K562 (cell line): ENCODE measurements at regions of chr6 and their contacts with region 1.

Region 1: GRCh38 chr6:49618257-49618656 is 18.4 kb downstream of the RHAG start:
- DNase-seq: no peak
- ATAC-seq: no peak
- H3K4me3 ChIP-seq: no peak overlapping the region
- H3K27ac ChIP-seq: no peak overlapping the region
- H3K4me1 ChIP-seq: no peaks in the 10 kb centered on the region; a peak in 1 of 5 replicates
- H3K27me3 ChIP-seq: no peaks in the 10 kb centered on the region
- CTCF ChIP-seq: no peak
- EP300 ChIP-seq: no peak
- POLR2A ChIP-seq: 0 out of 2 replicates have a peak, but pooled peaks have one; percentile 36
- RAD21 ChIP-seq: no peak

Region 2: GRCh38 chr6:50021894-50022293 is 403.6 kb after region 1 on chr6 and contains the start of gene DEFB110:
- CTCF ChIA-PET with region 1: no interaction called
- POLR2A ChIA-PET with region 1: no interaction called
- in situ Hi-C with region 1: loop called (anchors 5 kb)
- intact Hi-C with region 1: no loop called
- DNase-seq: no peak
- ATAC-seq: no peak
- H3K4me3 ChIP-seq: no peak within 1 kb of the TSS
- H3K27ac ChIP-seq: no peak within 1 kb of the TSS
- H3K4me1 ChIP-seq: no peaks in the 10 kb centered on the region
- H3K27me3 ChIP-seq: no peaks in the 10 kb centered on the region
- CTCF ChIP-seq: no peak
- EP300 ChIP-seq: no peak
- POLR2A ChIP-seq: no peak
- RAD21 ChIP-seq: no peak
- polyA plus RNA-seq, gene DEFB110: not detected